ENCODE measurements at regions of chr20 and their contacts with region 1.

Region 1: GRCh38 chr20:3927486-3928291 is 38.5 kb downstream of the PANK2 start:
- DNase-seq: no peak
- H3K4me3 ChIP-seq: no peak overlapping the region
- H3K27ac ChIP-seq: peak overlapping the region in 1 of 2 donors; percentile 74
- H3K4me1 ChIP-seq: peaks cover 0 to 14% of the 10 kb centered on the region in 2 donors
- H3K27me3 ChIP-seq: no peaks in the 10 kb centered on the region
- CTCF ChIP-seq: no peak
- POLR2A ChIP-seq: no peak

Region 2: GRCh38 chr20:2473516-2473915 is 1454.2 kb before region 1 on chr20:
- intact Hi-C with region 1: no loop called
- DNase-seq: no peak
- H3K4me3 ChIP-seq: no peak overlapping the region
- H3K27ac ChIP-seq: no peak overlapping the region
- H3K4me1 ChIP-seq: no peaks in the 10 kb centered on the region
- H3K27me3 ChIP-seq: no peaks in the 10 kb centered on the region
- CTCF ChIP-seq: no peak
- POLR2A ChIP-seq: no peak

Region 3: DNA sequence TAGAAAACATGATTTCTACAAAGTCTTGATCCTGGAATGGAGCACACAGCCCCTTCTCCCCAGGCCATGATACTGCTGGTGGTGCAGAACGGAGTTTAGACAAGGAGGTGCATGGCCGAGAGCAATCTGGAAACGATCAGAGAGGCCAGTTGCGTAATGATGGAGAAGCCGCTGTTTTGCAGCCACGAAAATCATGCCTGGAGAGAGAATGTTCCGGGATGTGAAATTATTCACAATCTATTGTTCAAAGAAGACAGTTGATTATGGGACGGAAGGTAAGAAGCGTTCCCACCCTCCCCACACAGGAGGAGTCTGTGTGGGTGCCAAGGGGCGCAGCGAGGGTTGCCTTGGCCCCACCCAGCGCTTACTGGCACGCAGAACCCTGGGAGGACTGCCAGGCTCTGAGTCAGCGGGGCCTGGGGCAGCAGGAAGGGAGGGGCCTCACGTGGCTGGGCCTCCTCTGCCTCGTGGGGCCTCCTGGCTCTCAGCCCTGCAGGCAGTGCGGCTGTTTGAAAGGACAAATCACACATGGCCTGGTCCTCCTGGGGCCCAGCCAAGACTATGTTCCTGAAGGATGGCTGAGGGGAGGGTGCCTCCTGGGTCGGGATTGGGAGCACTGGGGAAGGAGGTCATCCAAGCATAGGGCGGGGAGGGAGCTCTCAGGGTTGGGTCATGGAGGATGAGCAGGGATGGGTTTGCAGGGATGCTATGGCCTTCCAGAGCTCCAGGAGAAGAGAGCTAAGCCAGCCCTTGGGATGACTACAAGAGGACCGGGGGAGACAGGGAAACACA is 116.0 kb before region 1 on chr20:
- intact Hi-C with region 1: loop called (anchors 10 kb)
- DNase-seq: peak; percentile 98 to 99
- H3K4me3 ChIP-seq: peak overlapping the region; percentile 28 to 61 (median 45)
- H3K27ac ChIP-seq: peak overlapping the region; percentile 88 to 94
- H3K4me1 ChIP-seq: peaks cover 13 to 17% of the 10 kb centered on the region in 2 donors
- H3K27me3 ChIP-seq: no peaks in the 10 kb centered on the region
- CTCF ChIP-seq: no peak
- POLR2A ChIP-seq: peak; percentile 38

Region 4: GRCh38 chr20:3998998-3999397 is 71.3 kb after region 1 on chr20:
- intact Hi-C with region 1: loop called (anchors 2 kb)
- DNase-seq: no peak
- H3K4me3 ChIP-seq: no peak overlapping the region
- H3K27ac ChIP-seq: no peak overlapping the region
- H3K4me1 ChIP-seq: no peaks in the 10 kb centered on the region
- H3K27me3 ChIP-seq: no peaks in the 10 kb centered on the region
- CTCF ChIP-seq: no peak
- POLR2A ChIP-seq: no peak